ENCODE measurements at regions of chr15 and their contacts with region 1.

Region 1: DNA sequence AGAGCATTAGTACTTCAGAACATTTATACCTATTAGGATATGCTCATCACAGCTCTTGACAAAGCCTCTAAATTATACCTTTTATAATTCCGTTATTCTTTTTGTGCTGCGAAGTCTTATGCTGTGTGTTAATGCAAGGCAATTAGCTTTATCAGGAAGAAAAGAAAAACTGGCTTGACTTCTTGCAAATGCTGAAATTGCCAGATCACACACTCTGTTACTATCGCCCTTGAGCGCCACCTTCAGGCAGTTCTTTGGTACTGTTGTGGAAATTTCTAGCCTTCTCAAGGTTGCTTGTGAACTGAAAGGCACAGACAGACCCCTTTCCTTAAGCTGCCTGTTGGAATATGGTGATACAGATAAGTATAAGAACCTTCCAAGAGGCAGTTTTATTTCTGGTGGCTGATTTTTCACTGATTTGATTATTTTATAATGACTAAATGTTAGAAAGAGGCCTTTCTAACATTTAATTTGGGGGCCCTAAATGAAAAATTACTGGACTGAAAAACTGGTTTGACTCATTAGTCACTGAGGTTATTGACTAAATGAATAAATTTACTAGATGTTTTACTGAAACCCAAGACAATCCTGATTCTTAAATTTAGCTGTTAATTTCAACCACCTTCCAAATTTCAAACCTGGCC is 126.2 kb upstream of the RASGRP1 start:
- DNase-seq: no peak
- ATAC-seq: peak; percentile 68
- H3K4me3 ChIP-seq: no peak overlapping the region
- H3K27ac ChIP-seq: peak overlapping the region; percentile 27; the same call in 1 of the 2 replicates
- H3K4me1 ChIP-seq: peaks cover 28% of the 10 kb centered on the region
- H3K27me3 ChIP-seq: no peaks in the 10 kb centered on the region
- CTCF ChIP-seq: peak; percentile 85 to 89 (median 87); a peak in 5 of 6 replicates
- EP300 ChIP-seq: no peak
- POLR2A ChIP-seq: no peak
- RAD21 ChIP-seq: peak; percentile 79

Region 2: GRCh38 chr15:38453971-38454695 is 236.7 kb before region 1 on chr15 and contains the start of gene FAM98B:
- CTCF ChIA-PET with region 1: interaction called, 54 read pairs
- POLR2A ChIA-PET with region 1: interaction called, 9 read pairs
- RAD21 ChIA-PET with region 1: interaction called, 31 read pairs
- SMC1A ChIA-PET with region 1: interaction called, 48 read pairs
- in situ Hi-C with region 1: loop called (anchors 10 kb)
- intact Hi-C with region 1: no loop called
- DNase-seq: peak; percentile 62
- ATAC-seq: peak; percentile 93
- H3K4me3 ChIP-seq: peak within 1 kb of the TSS; percentile 84
- H3K27ac ChIP-seq: peak within 1 kb of the TSS; percentile 85
- H3K4me1 ChIP-seq: no peaks in the 10 kb centered on the region
- H3K27me3 ChIP-seq: no peaks in the 10 kb centered on the region
- CTCF ChIP-seq: no peak
- EP300 ChIP-seq: no peak; a peak in 1 of 4 replicates
- POLR2A ChIP-seq: peak; percentile 94
- RAD21 ChIP-seq: no peak
- polyA plus RNA-seq, gene FAM98B: 4.2 to 8.4 TPM

Region 3: DNA sequence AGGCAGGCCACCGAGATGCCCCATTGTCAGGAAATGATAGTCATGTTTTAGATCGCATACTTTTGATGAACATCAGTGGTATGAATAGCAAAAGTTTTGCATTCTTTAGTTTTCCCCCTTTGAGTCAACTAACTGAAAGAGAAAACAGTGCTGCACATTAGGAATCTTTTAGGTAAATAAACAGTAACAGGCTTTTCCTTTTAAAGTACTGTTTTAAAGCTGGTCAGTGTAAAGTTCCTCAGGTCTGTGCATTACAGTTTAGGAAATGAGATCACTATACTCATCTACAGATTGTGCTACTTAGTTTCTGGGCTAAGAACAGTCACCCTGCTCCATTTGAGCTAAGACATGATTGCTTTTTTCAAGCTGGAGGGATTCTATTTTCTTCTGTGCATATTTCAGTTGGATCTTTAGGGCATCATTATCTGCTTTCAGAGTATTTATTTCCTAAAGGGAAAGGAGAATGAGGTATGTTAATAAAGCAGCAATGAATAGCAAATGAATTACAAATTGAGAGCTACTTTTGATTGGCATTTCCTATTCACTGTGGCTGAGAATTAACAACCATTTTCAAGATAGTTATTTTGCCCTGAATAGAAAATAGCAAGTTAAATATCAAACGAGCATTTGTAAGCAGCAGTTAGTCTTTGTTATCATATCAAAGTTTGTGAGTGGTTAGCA is 200.4 kb before region 1 on chr15:
- CTCF ChIA-PET with region 1: interaction called, 16 read pairs
- POLR2A ChIA-PET with region 1: no interaction called
- RAD21 ChIA-PET with region 1: interaction called, 20 read pairs
- SMC1A ChIA-PET with region 1: interaction called, 37 read pairs
- in situ Hi-C with region 1: no loop called
- intact Hi-C with region 1: no loop called
- DNase-seq: no peak
- ATAC-seq: no peak
- H3K4me3 ChIP-seq: no peak overlapping the region
- H3K27ac ChIP-seq: no peak overlapping the region
- H3K4me1 ChIP-seq: no peaks in the 10 kb centered on the region
- H3K27me3 ChIP-seq: no peaks in the 10 kb centered on the region
- CTCF ChIP-seq: no peak
- EP300 ChIP-seq: no peak
- POLR2A ChIP-seq: no peak
- RAD21 ChIP-seq: no peak

Region 4: GRCh38 chr15:38521316-38521715 is 169.5 kb before region 1 on chr15:
- CTCF ChIA-PET with region 1: interaction called, 41 read pairs
- POLR2A ChIA-PET with region 1: interaction called, 8 read pairs
- RAD21 ChIA-PET with region 1: interaction called, 8 read pairs
- SMC1A ChIA-PET with region 1: interaction called, 208 read pairs
- in situ Hi-C with region 1: no loop called
- intact Hi-C with region 1: no loop called
- DNase-seq: no peak
- ATAC-seq: no peak
- H3K4me3 ChIP-seq: no peak overlapping the region
- H3K27ac ChIP-seq: no peak overlapping the region
- H3K4me1 ChIP-seq: no peaks in the 10 kb centered on the region
- H3K27me3 ChIP-seq: no peaks in the 10 kb centered on the region
- CTCF ChIP-seq: no peak
- EP300 ChIP-seq: no peak
- POLR2A ChIP-seq: no peak
- RAD21 ChIP-seq: no peak

Region 5: GRCh38 chr15:38563723-38564519 is 126.9 kb before region 1 on chr15:
- CTCF ChIA-PET with region 1: interaction called, 276 read pairs
- POLR2A ChIA-PET with region 1: interaction called, 12 read pairs
- RAD21 ChIA-PET with region 1: interaction called, 248 read pairs
- SMC1A ChIA-PET with region 1: interaction called, 293 read pairs
- in situ Hi-C with region 1: loop called (anchors 5 kb)
- intact Hi-C with region 1: no loop called
- DNase-seq: no peak
- ATAC-seq: peak; percentile 77
- H3K4me3 ChIP-seq: peak overlapping the region; percentile 75
- H3K27ac ChIP-seq: peak overlapping the region; percentile 72
- H3K4me1 ChIP-seq: peaks cover 37% of the 10 kb centered on the region
- H3K27me3 ChIP-seq: no peaks in the 10 kb centered on the region
- CTCF ChIP-seq: peak; percentile 88 to 95 (median 94)
- EP300 ChIP-seq: no peak
- POLR2A ChIP-seq: no peak; the same call in 1 of the 2 replicates
- RAD21 ChIP-seq: peak; percentile 75

Region 6: DNA sequence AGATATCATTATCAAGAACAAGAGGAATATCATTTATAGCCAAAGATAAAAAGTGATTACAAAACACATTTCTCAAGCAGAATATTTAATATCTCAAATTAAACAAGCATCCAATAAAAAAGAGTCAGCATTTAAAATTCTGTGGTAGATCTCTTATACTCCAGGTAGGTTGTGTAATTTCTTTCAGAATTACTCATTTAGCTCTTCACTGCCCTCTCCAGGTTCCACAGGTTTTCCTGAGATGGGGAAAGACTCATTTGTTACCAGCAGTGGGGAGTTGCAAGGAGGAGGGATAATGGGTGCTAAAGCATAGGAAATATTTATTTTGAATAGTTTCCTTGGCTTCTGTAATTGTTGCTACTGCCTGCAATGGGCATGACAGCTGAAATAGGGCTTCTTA is 43.1 kb before region 1 on chr15:
- CTCF ChIA-PET with region 1: interaction called, 115 read pairs
- POLR2A ChIA-PET with region 1: interaction called, 12 read pairs
- RAD21 ChIA-PET with region 1: interaction called, 150 read pairs
- SMC1A ChIA-PET with region 1: interaction called, 205 read pairs
- in situ Hi-C with region 1: no loop called
- intact Hi-C with region 1: no loop called
- DNase-seq: no peak
- ATAC-seq: no peak
- H3K4me3 ChIP-seq: no peak overlapping the region
- H3K27ac ChIP-seq: no peak overlapping the region
- H3K4me1 ChIP-seq: peaks cover 27% of the 10 kb centered on the region
- H3K27me3 ChIP-seq: no peaks in the 10 kb centered on the region
- CTCF ChIP-seq: peak in 2 of 3 experiments; percentile 5 to 17; a peak in 1 of 6 replicates
- EP300 ChIP-seq: no peak
- POLR2A ChIP-seq: no peak
- RAD21 ChIP-seq: peak; percentile 23; the same call in 1 of the 2 replicates

Region 7: GRCh38 chr15:38707802-38708671 is 17.2 kb after region 1 on chr15:
- CTCF ChIA-PET with region 1: interaction called, 60 read pairs
- POLR2A ChIA-PET with region 1: no interaction called
- RAD21 ChIA-PET with region 1: interaction called, 52 read pairs
- SMC1A ChIA-PET with region 1: interaction called, 28 read pairs
- in situ Hi-C with region 1: no loop called
- intact Hi-C with region 1: no loop called
- DNase-seq: no peak
- ATAC-seq: peak; percentile 98
- H3K4me3 ChIP-seq: no peak overlapping the region
- H3K27ac ChIP-seq: no peak overlapping the region
- H3K4me1 ChIP-seq: no peaks in the 10 kb centered on the region
- H3K27me3 ChIP-seq: no peaks in the 10 kb centered on the region
- CTCF ChIP-seq: peak; percentile 75 to 82 (median 76)
- EP300 ChIP-seq: no peak
- POLR2A ChIP-seq: no peak
- RAD21 ChIP-seq: peak; percentile 91

Region 8: GRCh38 chr15:38733331-38733730 is 42.5 kb after region 1 on chr15:
- CTCF ChIA-PET with region 1: no interaction called
- POLR2A ChIA-PET with region 1: no interaction called
- RAD21 ChIA-PET with region 1: no interaction called
- SMC1A ChIA-PET with region 1: no interaction called
- in situ Hi-C with region 1: no loop called
- intact Hi-C with region 1: no loop called
- DNase-seq: no peak
- ATAC-seq: no peak
- H3K4me3 ChIP-seq: no peak overlapping the region
- H3K27ac ChIP-seq: no peak overlapping the region
- H3K4me1 ChIP-seq: no peaks in the 10 kb centered on the region
- H3K27me3 ChIP-seq: no peaks in the 10 kb centered on the region
- CTCF ChIP-seq: no peak
- EP300 ChIP-seq: no peak
- POLR2A ChIP-seq: no peak
- RAD21 ChIP-seq: no peak

Measured in GM12878 (cell line).